Naive thymus-derived CD4-positive, alpha-beta T cell (primary cell): ENCODE measurements at regions of chr13 and their contacts with region 1.

Region 1: DNA sequence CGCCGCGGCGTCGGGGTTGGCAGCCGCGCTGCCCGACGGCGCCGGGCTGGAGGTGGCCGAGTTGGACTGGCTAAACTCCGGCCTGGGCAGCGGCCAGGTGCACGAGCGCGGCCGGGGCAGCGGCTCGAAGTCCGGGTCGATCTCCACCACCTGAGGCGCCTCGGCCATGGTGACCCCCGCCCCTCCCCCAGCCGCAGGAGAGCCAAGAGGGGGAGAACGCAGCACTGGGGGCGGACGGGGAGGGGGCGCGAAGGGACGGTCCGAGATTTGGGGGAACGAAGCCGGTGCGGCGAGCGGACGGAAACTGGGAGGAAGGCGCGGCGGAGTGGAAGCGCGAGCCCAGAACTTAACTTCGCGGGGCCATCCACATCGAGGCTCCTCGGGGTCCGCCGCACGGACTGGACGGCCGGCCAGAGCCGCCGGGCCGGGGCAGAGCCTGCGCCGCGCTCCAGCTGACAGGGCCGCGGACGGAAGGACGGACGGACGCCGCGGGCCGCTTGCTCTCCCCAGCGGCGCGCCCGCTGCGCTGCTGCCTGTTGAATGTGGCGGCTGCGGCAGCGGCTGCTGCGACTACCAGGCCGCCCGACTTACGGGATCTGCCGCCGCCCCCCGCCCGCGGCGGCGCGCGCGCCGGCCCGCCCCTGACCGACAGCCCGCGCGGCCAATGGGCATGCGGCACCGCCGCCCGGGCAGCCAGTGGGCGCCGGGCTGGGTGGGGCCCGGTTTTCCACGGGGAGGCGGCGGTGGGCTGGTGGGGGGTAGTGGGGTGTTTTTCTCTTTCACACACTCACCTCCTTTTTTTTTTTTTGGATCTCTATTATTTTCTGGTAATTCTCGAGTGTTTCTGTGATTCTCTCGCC is at the start of gene FOXO1:
- DNase-seq: peak; percentile 89 to 98 (median 94)
- ATAC-seq: peak; percentile 87
- H3K4me3 ChIP-seq: peak within 1 kb of the TSS; percentile 84
- H3K4me3 Mint-ChIP-seq: peak within 1 kb of the TSS; percentile 90 to 98 (median 94)
- H3K27ac ChIP-seq: peak within 1 kb of the TSS; percentile 93
- H3K27ac Mint-ChIP-seq: peak within 1 kb of the TSS; percentile 91 to 99 (median 92)
- H3K4me1 ChIP-seq: peaks cover 12 to 19% of the 10 kb centered on the region in 2 donors
- H3K4me1 Mint-ChIP-seq: peaks cover 28 to 51% (median 47%) of the 10 kb centered on the region in 7 donors
- H3K27me3 ChIP-seq: no peaks in the 10 kb centered on the region
- H3K27me3 Mint-ChIP-seq: no peaks in the 10 kb centered on the region
- total RNA-seq, gene FOXO1: 36.4 to 97.6 (median 93.7) TPM

Region 2: GRCh38 chr13:39777527-39778061 is 888.7 kb before region 1 on chr13:
- CTCF ChIA-PET with region 1: interaction called, 3 read pairs
- POLR2A ChIA-PET with region 1: interaction called, 3 read pairs
- intact Hi-C with region 1: loop called in 1 of 2 experiments (anchors 5 kb)
- DNase-seq: peak in 7 of 9 donors; percentile 7 to 58 (median 48)
- ATAC-seq: peak; percentile 62
- H3K4me3 ChIP-seq: no peak overlapping the region
- H3K4me3 Mint-ChIP-seq: peak overlapping the region in 2 of 10 donors; percentile 6 to 18
- H3K27ac ChIP-seq: no peak overlapping the region
- H3K27ac Mint-ChIP-seq: peak overlapping the region in 8 of 9 donors; percentile 8 to 60 (median 18)
- H3K4me1 ChIP-seq: peaks cover 0 to 22% of the 10 kb centered on the region in 2 donors
- H3K4me1 Mint-ChIP-seq: peaks cover 12 to 40% (median 36%) of the 10 kb centered on the region in 7 donors
- H3K27me3 ChIP-seq: no peaks in the 10 kb centered on the region
- H3K27me3 Mint-ChIP-seq: no peaks in the 10 kb centered on the region

Region 3: DNA sequence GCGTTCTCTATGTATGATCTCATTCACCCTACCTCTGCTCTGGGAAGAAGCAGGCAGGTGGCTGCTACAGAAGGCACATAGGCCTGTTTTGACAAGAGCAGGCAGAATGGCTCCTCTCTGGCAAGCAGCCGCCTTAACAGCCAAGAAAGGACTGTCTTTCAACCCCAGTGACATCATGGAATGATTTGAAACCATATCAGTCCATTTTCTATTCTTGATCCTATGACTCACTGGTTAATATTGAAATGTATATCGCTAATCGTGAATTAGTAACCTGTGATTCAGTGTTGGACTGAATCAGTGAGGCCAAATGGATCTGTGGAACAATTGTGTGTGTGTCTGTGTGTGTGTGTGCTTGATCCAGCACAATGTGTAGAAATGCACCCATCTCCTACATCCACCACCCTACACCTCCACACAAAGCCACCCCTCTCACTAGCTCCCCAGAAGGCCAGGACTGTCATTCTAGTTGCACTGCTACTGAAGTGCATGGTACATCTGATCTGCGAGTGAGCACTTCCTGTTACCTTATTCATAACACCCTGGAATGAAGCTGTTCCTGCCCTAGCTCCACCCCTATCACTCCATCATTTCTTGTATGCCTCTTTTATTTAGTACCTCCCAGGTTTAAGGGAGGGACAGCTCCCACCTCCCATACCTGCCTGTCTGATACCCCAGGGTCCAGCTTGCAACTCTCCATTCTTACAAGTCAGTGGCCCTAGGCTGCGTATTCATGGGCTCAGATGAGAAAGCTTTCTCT is 459.9 kb before region 1 on chr13:
- CTCF ChIA-PET with region 1: interaction called, 3 read pairs
- POLR2A ChIA-PET with region 1: interaction called, 21 read pairs
- intact Hi-C with region 1: loop called in 1 of 2 experiments (anchors 1 kb)
- DNase-seq: peak in 8 of 9 donors; percentile 14 to 82 (median 78)
- ATAC-seq: peak; percentile 92
- H3K4me3 ChIP-seq: peak overlapping the region; percentile 19
- H3K4me3 Mint-ChIP-seq: peak overlapping the region; percentile 60 to 86 (median 80)
- H3K27ac ChIP-seq: peak overlapping the region; percentile 73
- H3K27ac Mint-ChIP-seq: peak overlapping the region; percentile 97 to 100 (median 99)
- H3K4me1 ChIP-seq: peaks cover 44 to 70% of the 10 kb centered on the region in 2 donors
- H3K4me1 Mint-ChIP-seq: peaks cover 41 to 88% (median 84%) of the 10 kb centered on the region in 7 donors
- H3K27me3 ChIP-seq: no peaks in the 10 kb centered on the region
- H3K27me3 Mint-ChIP-seq: no peaks in the 10 kb centered on the region

Region 4: GRCh38 chr13:40485611-40486517 is 180.4 kb before region 1 on chr13:
- CTCF ChIA-PET with region 1: no interaction called
- POLR2A ChIA-PET with region 1: interaction called, 34 read pairs
- intact Hi-C with region 1: loop called (anchors 1 kb)
- DNase-seq: peak; percentile 29 to 93 (median 88)
- ATAC-seq: peak; percentile 97
- H3K4me3 ChIP-seq: peak overlapping the region; percentile 28
- H3K4me3 Mint-ChIP-seq: peak overlapping the region; percentile 67 to 88 (median 78)
- H3K27ac ChIP-seq: peak overlapping the region; percentile 71
- H3K27ac Mint-ChIP-seq: peak overlapping the region; percentile 91 to 100 (median 96)
- H3K4me1 ChIP-seq: peaks cover 45 to 89% of the 10 kb centered on the region in 2 donors
- H3K4me1 Mint-ChIP-seq: peaks cover 61 to 99% (median 90%) of the 10 kb centered on the region in 7 donors
- H3K27me3 ChIP-seq: no peaks in the 10 kb centered on the region
- H3K27me3 Mint-ChIP-seq: no peaks in the 10 kb centered on the region

Region 5: GRCh38 chr13:40624383-40624782 is 41.9 kb before region 1 on chr13:
- CTCF ChIA-PET with region 1: interaction called, 4 read pairs
- POLR2A ChIA-PET with region 1: interaction called, 9 read pairs
- intact Hi-C with region 1: loop called in 1 of 2 experiments (anchors 2 kb)
- DNase-seq: peak in 1 of 9 donors; percentile 52
- ATAC-seq: peak; percentile 43
- H3K4me3 ChIP-seq: no peak overlapping the region
- H3K4me3 Mint-ChIP-seq: peak overlapping the region in 9 of 10 donors; percentile 39 to 74 (median 53)
- H3K27ac ChIP-seq: peak overlapping the region; percentile 37
- H3K27ac Mint-ChIP-seq: peak overlapping the region in 8 of 9 donors; percentile 33 to 88 (median 64)
- H3K4me1 ChIP-seq: peaks cover 25 to 61% of the 10 kb centered on the region in 2 donors
- H3K4me1 Mint-ChIP-seq: peaks cover 59 to 100% (median 92%) of the 10 kb centered on the region in 7 donors
- H3K27me3 ChIP-seq: no peaks in the 10 kb centered on the region
- H3K27me3 Mint-ChIP-seq: no peaks in the 10 kb centered on the region

Region 6: DNA sequence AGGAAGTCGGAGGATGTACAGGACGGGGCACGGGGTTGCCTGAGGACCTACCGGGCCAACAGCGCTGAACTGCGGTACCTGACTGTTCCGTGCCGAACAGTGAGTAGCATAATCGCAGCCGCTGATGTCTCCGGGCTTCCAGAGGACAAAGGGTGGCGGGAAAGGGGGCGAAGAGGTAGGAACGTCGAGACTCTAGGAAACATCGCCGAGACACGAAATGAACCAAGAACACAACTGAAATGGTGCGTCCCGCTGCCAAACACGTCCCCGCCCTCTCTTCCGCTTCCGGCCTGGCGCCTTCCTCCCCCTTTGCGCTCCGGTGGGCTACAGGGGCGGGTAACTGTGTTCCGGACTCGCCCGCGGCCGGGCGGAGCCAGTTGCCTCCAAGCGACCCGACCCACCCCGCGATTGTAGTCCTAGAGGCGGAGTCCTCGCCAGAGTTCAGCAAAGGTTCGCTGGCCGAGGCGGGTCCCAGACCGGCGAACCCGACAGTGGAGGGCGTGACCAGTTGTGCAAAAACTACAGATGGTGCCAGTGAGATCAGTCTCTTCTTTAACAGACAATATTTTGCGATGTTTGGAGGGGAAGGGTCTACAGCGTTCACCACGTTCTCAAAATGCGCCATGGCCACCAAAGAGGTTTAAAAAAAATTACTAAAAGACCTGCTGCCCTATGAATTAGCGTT is 104.8 kb after region 1 on chr13 and contains the start of gene MRPS31:
- CTCF ChIA-PET with region 1: no interaction called
- POLR2A ChIA-PET with region 1: interaction called, 3 read pairs
- intact Hi-C with region 1: loop called in 1 of 2 experiments (anchors 1 kb)
- DNase-seq: peak; percentile 89 to 97 (median 93)
- ATAC-seq: peak; percentile 99
- H3K4me3 ChIP-seq: peak within 1 kb of the TSS; percentile 78
- H3K4me3 Mint-ChIP-seq: peak within 1 kb of the TSS; percentile 94 to 100 (median 99)
- H3K27ac ChIP-seq: peak within 1 kb of the TSS; percentile 89
- H3K27ac Mint-ChIP-seq: peak within 1 kb of the TSS; percentile 93 to 100 (median 98)
- H3K4me1 ChIP-seq: peaks cover 15 to 16% of the 10 kb centered on the region in 2 donors
- H3K4me1 Mint-ChIP-seq: peaks cover 16 to 41% (median 33%) of the 10 kb centered on the region in 7 donors
- H3K27me3 ChIP-seq: no peaks in the 10 kb centered on the region
- H3K27me3 Mint-ChIP-seq: no peaks in the 10 kb centered on the region
- total RNA-seq, gene MRPS31: 15.8 to 39.9 (median 34.7) TPM

Region 7: GRCh38 chr13:41137951-41138350 is 471.7 kb after region 1 on chr13:
- CTCF ChIA-PET with region 1: no interaction called
- POLR2A ChIA-PET with region 1: no interaction called
- intact Hi-C with region 1: no loop called
- DNase-seq: no peak
- ATAC-seq: no peak
- H3K4me3 ChIP-seq: no peak overlapping the region
- H3K4me3 Mint-ChIP-seq: no peak overlapping the region
- H3K27ac ChIP-seq: no peak overlapping the region
- H3K27ac Mint-ChIP-seq: no peak overlapping the region
- H3K4me1 ChIP-seq: peaks cover 0 to 6% of the 10 kb centered on the region in 2 donors
- H3K4me1 Mint-ChIP-seq: peaks cover 10 to 17% (median 13%) of the 10 kb centered on the region in 7 donors
- H3K27me3 ChIP-seq: no peaks in the 10 kb centered on the region
- H3K27me3 Mint-ChIP-seq: no peaks in the 10 kb centered on the region